ENCODE measurements at regions of chr7 and their contacts with region 1.

Region 1: GRCh38 chr7:104231054-104232046 is 23.5 kb upstream of the ORC5 start:
- DNase-seq: peak; percentile 52 to 76 (median 67)
- ATAC-seq: peak; percentile 99
- H3K4me3 ChIP-seq: no peak overlapping the region
- H3K27ac ChIP-seq: no peak overlapping the region
- H3K4me1 ChIP-seq: 0 out of 5 replicates have a peak, but pooled peaks cover 0 to 2% of the 10 kb centered on the region in 2 experiments
- H3K27me3 ChIP-seq: 0 out of 5 replicates have a peak, but pooled peaks cover 0 to 3% of the 10 kb centered on the region in 2 experiments
- CTCF ChIP-seq: peak; percentile 86 to 97 (median 91)
- EP300 ChIP-seq: no peak
- POLR2A ChIP-seq: no peak
- RAD21 ChIP-seq: peak; percentile 66 to 80

Region 2: GRCh38 chr7:104341546-104341945 is 110.2 kb after region 1 on chr7:
- CTCF ChIA-PET with region 1: no interaction called
- POLR2A ChIA-PET with region 1: no interaction called
- in situ Hi-C with region 1: no loop called
- intact Hi-C with region 1: loop called (anchors 5 kb)
- DNase-seq: peak; percentile 10 to 44 (median 24)
- ATAC-seq: peak; percentile 85
- H3K4me3 ChIP-seq: no peak overlapping the region
- H3K27ac ChIP-seq: no peak overlapping the region
- H3K4me1 ChIP-seq: no peaks in the 10 kb centered on the region
- H3K27me3 ChIP-seq: peaks cover 0 to 2% of the 10 kb centered on the region in 2 experiments; a peak in 1 of 5 replicates
- CTCF ChIP-seq: peak; percentile 41 to 56 (median 47); a peak in 5 of 6 replicates
- EP300 ChIP-seq: no peak
- POLR2A ChIP-seq: no peak
- RAD21 ChIP-seq: peak in 1 of 2 experiments; percentile 58; a peak in 2 of 4 replicates

Measured in K562 (cell line).